ENCODE measurements at regions of chr12 and their contacts with region 1.

Region 1: GRCh38 chr12:52568111-52568510 is 5.5 kb downstream of the KRT74 start:
- DNase-seq: no peak
- ATAC-seq: no peak
- H3K4me3 ChIP-seq: no peak overlapping the region
- H3K27ac ChIP-seq: no peak overlapping the region
- H3K4me1 ChIP-seq: no peaks in the 10 kb centered on the region
- CTCF ChIP-seq: no peak
- EP300 ChIP-seq: no peak
- POLR2A ChIP-seq: no peak
- RAD21 ChIP-seq: no peak

Region 2: DNA sequence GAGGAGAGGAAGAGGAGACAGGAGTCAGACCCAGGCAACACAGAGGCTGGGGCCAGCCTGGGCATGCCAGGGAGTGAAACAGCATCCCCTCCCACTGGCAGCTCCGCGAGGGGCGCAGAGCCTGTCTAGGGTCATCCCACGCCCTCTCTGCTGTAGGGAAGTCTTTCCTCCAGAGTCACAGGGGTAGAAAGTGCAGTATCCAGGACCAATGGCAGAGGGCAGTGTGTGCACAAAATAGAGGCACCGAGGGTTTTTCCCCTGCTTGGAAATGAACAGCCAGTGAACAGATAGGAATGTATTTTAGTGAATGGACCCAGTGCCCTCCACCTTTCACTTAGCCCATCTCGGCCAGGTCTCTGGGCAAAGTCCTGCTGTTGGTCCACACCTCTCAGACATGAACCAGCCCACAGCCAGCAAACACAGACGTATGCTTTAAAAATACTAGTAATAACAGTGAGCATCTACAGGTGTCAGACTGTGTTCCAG is 14.9 kb after region 1 on chr12:
- CTCF ChIA-PET with region 1: interaction called, 39 read pairs
- POLR2A ChIA-PET with region 1: no interaction called
- DNase-seq: peak; percentile 74 to 88
- ATAC-seq: peak; percentile 87 to 96
- H3K4me3 ChIP-seq: no peak overlapping the region
- H3K27ac ChIP-seq: peak overlapping the region; percentile 43 to 82
- H3K4me1 ChIP-seq: peaks cover 24% of the 10 kb centered on the region
- CTCF ChIP-seq: peak; percentile 85
- EP300 ChIP-seq: no peak
- POLR2A ChIP-seq: no peak
- RAD21 ChIP-seq: peak; percentile 94 to 97

Measured in A549 (cell line).